H1 (cell line): ENCODE measurements at regions of chr3 and their contacts with region 1.

Region 1: GRCh38 chr3:194285024-194285849 is 65.9 kb downstream of the CPN2 start:
- DNase-seq: no peak
- H3K4me3 ChIP-seq: no peak overlapping the region; a peak in 1 of 8 replicates
- H3K27ac ChIP-seq: no peak overlapping the region
- H3K4me1 ChIP-seq: peaks cover 20 to 28% (median 21%) of the 10 kb centered on the region in 4 experiments; a peak in 6 of 7 replicates
- H3K27me3 ChIP-seq: no peaks in the 10 kb centered on the region; a peak in 1 of 7 replicates
- CTCF ChIP-seq: no peak
- EP300 ChIP-seq: no peak
- POLR2A ChIP-seq: no peak
- RAD21 ChIP-seq: no peak

Region 2: GRCh38 chr3:194204042-194204987 is 80.9 kb before region 1 on chr3:
- CTCF ChIA-PET with region 1: no interaction called
- POLR2A ChIA-PET with region 1: no interaction called
- DNase-seq: peak in 1 of 2 experiments; percentile 65
- H3K4me3 ChIP-seq: peak overlapping the region; percentile 19 to 61 (median 32)
- H3K27ac ChIP-seq: no peak overlapping the region
- H3K4me1 ChIP-seq: peaks cover 7 to 15% (median 11%) of the 10 kb centered on the region in 4 experiments; a peak in 6 of 7 replicates
- H3K27me3 ChIP-seq: peaks cover 0 to 16% (median 12%) of the 10 kb centered on the region in 4 experiments; a peak in 5 of 7 replicates
- CTCF ChIP-seq: no peak
- EP300 ChIP-seq: no peak
- POLR2A ChIP-seq: 0 out of 3 replicates have a peak, but pooled peaks of 1 of the 2 experiments have one; percentile 37
- RAD21 ChIP-seq: no peak

Region 3: GRCh38 chr3:194296454-194297263 is 11.4 kb after region 1 on chr3:
- CTCF ChIA-PET with region 1: interaction called, 31 read pairs
- POLR2A ChIA-PET with region 1: interaction called, 42 read pairs
- DNase-seq: peak in 1 of 2 experiments; percentile 88
- H3K4me3 ChIP-seq: peak overlapping the region; percentile 22 to 55 (median 26); a peak in 6 of 8 replicates
- H3K27ac ChIP-seq: peak overlapping the region; percentile 82
- H3K4me1 ChIP-seq: peaks cover 17 to 33% (median 22%) of the 10 kb centered on the region in 4 experiments
- H3K27me3 ChIP-seq: peaks cover 0 to 3% (median 0%) of the 10 kb centered on the region in 4 experiments; a peak in 1 of 7 replicates
- CTCF ChIP-seq: no peak
- EP300 ChIP-seq: no peak; a peak in 1 of 3 replicates
- POLR2A ChIP-seq: peak; percentile 21 to 59
- RAD21 ChIP-seq: no peak

Region 4: DNA sequence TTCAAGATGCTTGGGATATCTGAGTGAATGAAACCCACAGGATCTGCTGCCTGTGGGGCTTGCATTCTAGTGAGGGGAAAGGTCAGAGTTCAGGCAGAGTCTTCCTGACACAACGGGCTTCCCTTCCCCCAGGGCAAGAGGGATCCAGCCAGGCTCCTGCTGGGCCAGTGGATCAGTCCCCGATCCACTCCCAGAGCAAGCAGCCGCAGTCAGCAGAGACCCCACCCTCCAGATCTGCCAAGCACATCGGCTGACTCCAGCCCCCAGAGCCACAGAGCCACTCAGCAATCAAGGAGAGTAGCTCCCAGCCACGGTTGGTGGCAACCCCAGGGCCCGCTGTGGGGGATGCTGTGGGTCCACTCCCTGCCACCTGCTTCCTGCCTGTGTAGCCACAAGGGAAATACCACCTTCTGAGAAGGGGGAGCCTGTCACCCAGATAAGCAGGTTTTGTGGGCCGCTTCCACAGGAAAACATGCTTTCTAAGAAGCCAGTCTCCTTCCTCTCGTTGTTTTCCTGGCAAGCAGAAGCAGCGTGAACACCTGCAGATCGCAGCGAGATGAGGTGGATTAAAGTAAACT is 21.0 kb after region 1 on chr3:
- CTCF ChIA-PET with region 1: interaction called, 31 read pairs
- POLR2A ChIA-PET with region 1: interaction called, 6 read pairs
- DNase-seq: no peak
- H3K4me3 ChIP-seq: no peak overlapping the region
- H3K27ac ChIP-seq: no peak overlapping the region
- H3K4me1 ChIP-seq: peaks cover 3 to 22% (median 13%) of the 10 kb centered on the region in 4 experiments
- H3K27me3 ChIP-seq: peaks cover 0 to 2% (median 0%) of the 10 kb centered on the region in 4 experiments; a peak in 3 of 7 replicates
- CTCF ChIP-seq: no peak
- EP300 ChIP-seq: no peak
- POLR2A ChIP-seq: no peak
- RAD21 ChIP-seq: no peak

Region 5: DNA sequence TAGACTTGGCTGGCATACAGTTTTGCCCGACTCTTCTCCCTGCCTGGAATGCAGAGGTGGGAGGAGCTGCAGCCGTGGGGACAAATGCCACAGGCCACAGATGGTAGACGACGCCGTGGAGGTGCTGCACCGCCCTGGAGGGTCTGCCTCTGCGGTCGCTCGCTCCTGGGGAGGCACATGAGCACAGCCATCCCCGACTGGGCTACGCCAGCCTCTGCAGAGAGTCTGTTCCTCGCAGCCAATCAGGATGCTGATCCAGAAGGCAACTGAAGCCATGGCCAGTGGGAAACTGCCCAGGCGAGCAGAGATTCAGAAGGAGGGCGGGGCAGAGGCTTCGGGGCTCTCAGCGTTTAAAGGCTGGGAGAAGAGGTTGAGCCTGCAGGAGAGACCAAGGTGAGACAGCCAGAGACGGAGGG is 96.2 kb after region 1 on chr3:
- CTCF ChIA-PET with region 1: no interaction called
- POLR2A ChIA-PET with region 1: no interaction called
- DNase-seq: no peak
- H3K4me3 ChIP-seq: no peak overlapping the region
- H3K27ac ChIP-seq: no peak overlapping the region
- H3K4me1 ChIP-seq: peaks cover 0 to 10% (median 6%) of the 10 kb centered on the region in 4 experiments; a peak in 6 of 7 replicates
- H3K27me3 ChIP-seq: no peaks in the 10 kb centered on the region; a peak in 1 of 7 replicates
- CTCF ChIP-seq: no peak
- EP300 ChIP-seq: no peak
- POLR2A ChIP-seq: no peak
- RAD21 ChIP-seq: no peak